Activated naive CD4-positive, alpha-beta T cell treated with anti-CD3 and anti-CD28 coated beads for 36 hours (primary cell): ENCODE measurements at regions of chr2 and their contacts with region 1.

Region 1: GRCh38 chr2:237572021-237572741 is 5.8 kb downstream of the PRLH start:
- DNase-seq: peak; percentile 93
- H3K4me3 Mint-ChIP-seq: no peak overlapping the region
- H3K27ac Mint-ChIP-seq: no peak overlapping the region
- H3K4me1 Mint-ChIP-seq: peaks cover 5% of the 10 kb centered on the region
- H3K27me3 Mint-ChIP-seq: no peaks in the 10 kb centered on the region

Region 2: DNA sequence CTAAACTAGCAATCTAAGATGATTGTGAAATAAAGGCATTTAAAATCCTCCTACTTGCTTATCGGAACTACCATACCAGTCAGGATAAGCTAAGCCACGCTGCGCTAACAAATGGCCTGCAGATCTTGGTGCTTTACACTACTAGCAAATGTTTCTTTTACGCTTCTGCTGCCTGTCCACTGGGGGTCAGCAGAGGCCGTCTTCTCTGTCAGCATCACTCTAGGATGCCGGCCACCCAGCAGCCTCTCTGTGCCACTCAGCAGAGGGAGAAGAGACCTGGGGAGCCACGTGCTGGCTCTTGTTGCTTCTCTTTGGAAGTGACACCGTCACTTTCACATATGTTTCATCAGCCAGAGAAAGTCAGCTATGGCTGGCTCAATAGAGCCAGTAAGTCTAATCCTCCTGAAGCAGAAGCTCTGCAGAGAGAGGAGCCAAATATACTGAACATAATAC is 449.9 kb before region 1 on chr2:
- CTCF ChIA-PET with region 1: interaction called, 4 read pairs
- intact Hi-C with region 1: loop called (anchors 10 kb)
- DNase-seq: peak; percentile 78
- H3K4me3 Mint-ChIP-seq: no peak overlapping the region
- H3K27ac Mint-ChIP-seq: no peak overlapping the region
- H3K4me1 Mint-ChIP-seq: no peaks in the 10 kb centered on the region
- H3K27me3 Mint-ChIP-seq: no peaks in the 10 kb centered on the region

Region 3: DNA sequence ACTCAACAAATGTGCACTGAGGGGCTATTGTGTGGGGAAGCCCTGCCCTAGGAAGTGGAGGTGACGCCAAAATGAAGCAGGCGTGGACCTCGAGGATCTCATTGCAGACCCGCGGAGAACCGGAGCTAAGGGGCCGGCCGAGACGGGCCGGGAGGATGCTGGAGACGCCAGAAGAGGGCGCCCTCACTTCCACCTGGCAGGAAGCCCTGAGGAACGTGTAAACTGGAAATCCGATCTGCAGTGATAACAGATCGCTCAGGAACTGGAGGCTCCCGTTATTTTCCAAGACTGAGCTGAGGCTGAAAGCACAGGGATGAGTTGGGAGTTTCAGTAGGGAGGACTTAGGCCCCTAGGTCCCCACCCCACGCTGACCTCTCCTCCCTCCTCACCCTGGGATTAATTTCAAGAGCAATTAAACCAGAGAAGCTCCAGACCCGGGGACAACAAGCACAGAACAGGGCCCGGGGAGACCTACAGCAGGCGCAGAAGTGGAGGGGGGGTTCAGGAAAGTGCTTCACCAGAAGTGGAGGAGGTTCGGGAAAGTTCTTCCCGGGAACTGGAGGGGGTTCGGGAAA is 150.6 kb before region 1 on chr2:
- CTCF ChIA-PET with region 1: interaction called, 15 read pairs
- intact Hi-C with region 1: loop called (anchors 1 kb)
- DNase-seq: peak; percentile 88
- H3K4me3 Mint-ChIP-seq: peak overlapping the region; percentile 25
- H3K27ac Mint-ChIP-seq: no peak overlapping the region
- H3K4me1 Mint-ChIP-seq: peaks cover 29% of the 10 kb centered on the region
- H3K27me3 Mint-ChIP-seq: peaks cover 11% of the 10 kb centered on the region

Region 4: GRCh38 chr2:237512774-237513466 is 59.3 kb before region 1 on chr2:
- CTCF ChIA-PET with region 1: interaction called, 300 read pairs
- intact Hi-C with region 1: loop called (anchors 1 kb)
- DNase-seq: peak; percentile 90
- H3K4me3 Mint-ChIP-seq: no peak overlapping the region
- H3K27ac Mint-ChIP-seq: no peak overlapping the region
- H3K4me1 Mint-ChIP-seq: no peaks in the 10 kb centered on the region
- H3K27me3 Mint-ChIP-seq: no peaks in the 10 kb centered on the region

Region 5: GRCh38 chr2:237530472-237531433 is 41.4 kb before region 1 on chr2:
- CTCF ChIA-PET with region 1: interaction called, 12 read pairs
- intact Hi-C with region 1: no loop called
- DNase-seq: no peak
- H3K4me3 Mint-ChIP-seq: no peak overlapping the region
- H3K27ac Mint-ChIP-seq: no peak overlapping the region
- H3K4me1 Mint-ChIP-seq: no peaks in the 10 kb centered on the region
- H3K27me3 Mint-ChIP-seq: no peaks in the 10 kb centered on the region

Region 6: DNA sequence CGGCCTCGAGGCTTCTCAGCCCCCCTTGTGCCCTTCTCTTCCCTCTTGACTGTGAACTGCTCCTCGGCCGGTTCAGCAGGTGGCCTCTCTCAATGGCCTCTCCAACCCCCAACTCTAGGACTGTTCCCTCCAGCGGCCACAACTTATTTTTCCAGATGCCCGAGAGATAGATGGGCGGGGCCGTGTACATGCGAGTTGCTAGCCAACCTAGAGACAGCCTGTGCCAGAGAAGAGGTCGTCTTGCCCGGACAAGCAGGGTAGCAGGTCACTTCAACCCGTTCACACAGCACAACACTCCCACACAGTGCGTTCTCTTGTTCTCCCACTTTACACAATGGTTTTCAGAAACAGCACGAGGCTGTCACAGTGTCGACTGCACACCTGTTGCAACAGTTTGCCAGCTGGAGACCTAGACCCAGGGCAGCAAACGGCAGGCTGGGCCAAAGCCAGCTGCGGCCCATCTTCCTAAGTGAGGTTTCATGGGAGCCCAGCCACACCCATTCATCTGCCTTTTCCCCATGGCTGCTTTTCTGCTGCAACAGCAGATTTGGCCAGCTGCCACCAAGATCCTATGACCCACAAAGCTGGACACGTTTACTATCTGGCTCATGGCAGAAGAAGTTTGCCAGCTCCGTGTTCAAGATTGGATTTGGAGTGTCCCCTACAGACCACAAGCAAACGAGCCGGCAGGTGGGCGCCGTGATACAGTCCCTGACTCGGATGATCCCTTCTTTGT is 13.1 kb before region 1 on chr2:
- CTCF ChIA-PET with region 1: interaction called, 17 read pairs
- intact Hi-C with region 1: loop called (anchors 1 kb)
- DNase-seq: no peak
- H3K4me3 Mint-ChIP-seq: no peak overlapping the region
- H3K27ac Mint-ChIP-seq: no peak overlapping the region
- H3K4me1 Mint-ChIP-seq: peaks cover 13% of the 10 kb centered on the region
- H3K27me3 Mint-ChIP-seq: peaks cover 7% of the 10 kb centered on the region

Region 7: DNA sequence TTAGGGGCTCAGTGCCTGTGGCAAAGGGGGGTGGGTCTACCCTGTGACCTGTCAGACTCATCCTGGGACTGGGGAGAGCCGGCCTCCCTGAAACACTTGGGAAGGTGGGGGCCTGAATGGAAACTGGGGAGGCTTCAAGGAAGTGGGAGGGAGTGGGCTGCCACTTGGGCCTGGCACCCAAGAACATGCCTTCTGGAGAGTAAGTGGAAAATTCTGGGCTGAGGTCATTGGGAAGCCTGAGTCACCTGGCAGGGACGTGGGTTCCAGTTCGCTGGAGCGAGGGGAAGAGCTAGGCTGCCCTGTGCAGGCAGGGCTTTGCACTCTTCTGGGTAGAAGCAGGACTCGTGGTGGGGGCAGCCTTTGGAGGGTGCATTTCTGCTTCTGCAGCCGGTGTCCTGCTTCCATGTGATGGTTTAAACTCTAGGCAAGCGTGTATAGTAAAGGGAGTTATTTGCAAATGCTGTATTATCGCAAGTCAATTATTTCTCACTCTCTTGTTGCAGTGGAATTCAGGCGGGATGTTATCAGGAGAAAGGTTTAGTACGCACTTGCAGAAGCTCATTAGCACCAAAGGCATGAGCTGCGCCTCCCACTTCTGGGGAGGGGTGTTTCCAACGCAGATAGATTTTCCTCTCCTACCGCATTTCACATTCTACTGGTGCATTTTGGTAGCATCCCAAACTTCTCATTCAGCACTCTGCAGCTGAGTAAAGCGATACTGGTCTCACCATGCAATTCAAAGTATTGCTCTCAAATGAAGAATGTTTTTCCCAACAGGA is 59.0 kb after region 1 on chr2:
- CTCF ChIA-PET with region 1: no interaction called
- intact Hi-C with region 1: no loop called
- DNase-seq: no peak
- H3K4me3 Mint-ChIP-seq: no peak overlapping the region
- H3K27ac Mint-ChIP-seq: no peak overlapping the region
- H3K4me1 Mint-ChIP-seq: peaks cover 20% of the 10 kb centered on the region
- H3K27me3 Mint-ChIP-seq: peaks cover 6% of the 10 kb centered on the region